ENCODE measurements at regions of chr19 and their contacts with region 1.

Region 1: GRCh38 chr19:10580979-10581631 is 6.0 kb downstream of the AP1M2 start:
- DNase-seq: peak; percentile 68 to 87
- ATAC-seq: peak; percentile 93 to 97
- H3K4me3 ChIP-seq: peak overlapping the region in 3 of 4 donors; percentile 28 to 44 (median 44)
- H3K27ac ChIP-seq: no peak overlapping the region
- H3K4me1 ChIP-seq: peaks cover 0 to 4% of the 10 kb centered on the region in 2 donors
- H3K27me3 ChIP-seq: no peaks in the 10 kb centered on the region
- CTCF ChIP-seq: peak; percentile 98 to 100 (median 99)
- POLR2A ChIP-seq: no peak

Region 2: DNA sequence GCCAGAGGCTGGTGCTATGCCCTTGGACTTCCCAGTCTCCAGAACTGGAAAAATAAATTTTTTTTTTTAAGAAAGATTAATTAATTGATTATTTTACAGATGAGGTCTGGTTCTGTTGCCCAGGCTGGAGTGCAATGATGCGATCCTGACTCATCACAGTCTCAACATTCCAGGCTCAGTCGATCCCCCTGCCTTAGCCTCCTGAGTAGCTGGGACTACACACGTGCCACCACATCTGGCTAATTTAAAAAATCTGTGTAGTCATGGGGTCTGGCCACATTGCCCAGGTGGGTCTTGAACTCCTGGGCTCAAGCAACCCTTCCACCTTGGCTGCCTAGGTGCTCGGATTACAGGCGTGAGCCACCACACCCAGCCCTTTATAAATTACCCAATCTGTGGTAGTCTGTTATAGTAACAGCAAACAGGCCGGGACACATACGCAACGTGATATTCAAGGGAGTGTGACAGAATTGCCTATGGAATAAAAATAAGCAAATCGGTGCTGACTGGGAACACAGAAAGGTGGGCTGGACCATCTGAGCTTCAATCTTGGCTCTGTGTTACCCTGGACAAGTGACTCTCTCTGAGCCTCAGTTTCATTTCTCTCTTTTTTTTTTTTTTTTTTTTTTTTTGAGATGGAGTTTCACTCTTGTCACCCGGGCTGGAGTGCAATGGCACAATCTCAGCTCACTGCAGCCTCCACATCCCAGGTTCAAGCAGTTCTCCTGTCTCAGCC is 703.2 kb before region 1 on chr19:
- in situ Hi-C with region 1: no loop called
- intact Hi-C with region 1: no loop called
- DNase-seq: no peak
- ATAC-seq: no peak
- H3K4me3 ChIP-seq: no peak overlapping the region
- H3K27ac ChIP-seq: no peak overlapping the region
- H3K4me1 ChIP-seq: no peaks in the 10 kb centered on the region
- H3K27me3 ChIP-seq: no peaks in the 10 kb centered on the region
- CTCF ChIP-seq: no peak
- POLR2A ChIP-seq: no peak

Region 3: GRCh38 chr19:10644260-10645007 is 63.3 kb after region 1 on chr19:
- in situ Hi-C with region 1: loop called (anchors 5 kb)
- intact Hi-C with region 1: loop called (anchors 1 kb)
- DNase-seq: peak; percentile 73 to 80
- ATAC-seq: peak; percentile 87 to 94
- H3K4me3 ChIP-seq: no peak overlapping the region
- H3K27ac ChIP-seq: peak overlapping the region; percentile 26 to 50 (median 36)
- H3K4me1 ChIP-seq: peaks cover 17 to 18% of the 10 kb centered on the region in 2 donors
- H3K27me3 ChIP-seq: no peaks in the 10 kb centered on the region
- CTCF ChIP-seq: peak; percentile 86 to 94 (median 93)
- POLR2A ChIP-seq: no peak

Region 4: GRCh38 chr19:10695401-10696398 is 114.6 kb after region 1 on chr19:
- in situ Hi-C with region 1: no loop called
- intact Hi-C with region 1: loop called (anchors 5 kb)
- DNase-seq: peak; percentile 75 to 88
- ATAC-seq: peak; percentile 91 to 92
- H3K4me3 ChIP-seq: peak overlapping the region in 3 of 4 donors; percentile 20 to 38 (median 33)
- H3K27ac ChIP-seq: no peak overlapping the region
- H3K4me1 ChIP-seq: peaks cover 10 to 12% of the 10 kb centered on the region in 2 donors
- H3K27me3 ChIP-seq: no peaks in the 10 kb centered on the region
- CTCF ChIP-seq: no peak
- POLR2A ChIP-seq: no peak

Measured in gastrocnemius medialis (tissue), 4 donors.